A549 (cell line): ENCODE measurements at regions of chr19 and their contacts with region 1.

Region 1: GRCh38 chr19:38229585-38230073 is 5.6 kb upstream of the DPF1 start:
- DNase-seq: peak; percentile 89 to 93
- ATAC-seq: peak; percentile 49 to 79
- H3K4me3 ChIP-seq: peak overlapping the region; percentile 52
- H3K27ac ChIP-seq: peak overlapping the region in 1 of 2 experiments; percentile 67; a peak in 3 of 6 replicates
- H3K4me1 ChIP-seq: peaks cover 25% of the 10 kb centered on the region
- CTCF ChIP-seq: no peak
- EP300 ChIP-seq: no peak
- POLR2A ChIP-seq: no peak
- RAD21 ChIP-seq: no peak

Region 2: DNA sequence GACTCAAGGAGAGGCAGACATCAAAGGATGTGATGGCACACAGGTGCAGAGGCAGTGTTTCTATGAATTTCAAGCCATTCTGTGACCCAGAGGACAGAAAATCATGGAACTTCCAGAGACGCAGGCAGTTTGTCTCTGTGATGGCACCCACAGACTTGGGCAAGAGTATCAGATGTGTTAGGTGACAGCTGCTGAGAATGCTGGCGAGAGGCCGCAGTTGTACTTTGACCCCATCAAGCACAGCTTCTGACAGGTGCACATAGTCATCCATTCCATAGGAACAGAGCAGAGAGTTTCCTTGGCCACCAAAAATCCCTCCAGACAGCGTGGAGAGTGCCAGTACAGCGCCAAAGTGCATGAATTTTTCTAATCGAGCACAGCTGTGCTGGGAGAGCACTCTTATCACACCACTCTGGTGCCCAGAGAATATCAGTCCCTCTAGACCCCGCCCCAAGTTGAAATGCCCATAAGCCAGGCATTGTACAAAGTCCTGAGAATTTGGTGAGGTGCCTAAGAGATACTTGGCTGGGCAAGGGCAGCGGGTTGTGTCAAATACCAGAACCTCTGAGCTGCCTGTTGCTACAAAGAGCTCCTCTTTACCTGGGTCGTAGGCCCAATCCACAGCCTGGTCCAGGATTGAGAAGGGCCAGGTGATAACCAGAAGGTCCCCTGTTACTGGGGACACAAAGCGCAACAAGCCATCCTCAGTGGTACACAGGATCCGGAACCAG is 335.6 kb before region 1 on chr19:
- CTCF ChIA-PET with region 1: interaction called, 187 read pairs
- POLR2A ChIA-PET with region 1: no interaction called
- DNase-seq: no peak
- ATAC-seq: no peak
- H3K4me3 ChIP-seq: no peak overlapping the region
- H3K27ac ChIP-seq: no peak overlapping the region
- H3K4me1 ChIP-seq: no peaks in the 10 kb centered on the region
- CTCF ChIP-seq: no peak
- EP300 ChIP-seq: no peak
- POLR2A ChIP-seq: no peak
- RAD21 ChIP-seq: no peak

Region 3: GRCh38 chr19:38263689-38264485 is 34.3 kb after region 1 on chr19:
- CTCF ChIA-PET with region 1: interaction called, 613 read pairs
- POLR2A ChIA-PET with region 1: no interaction called
- DNase-seq: peak; percentile 78 to 87
- ATAC-seq: peak; percentile 64 to 66
- H3K4me3 ChIP-seq: peak overlapping the region; percentile 67
- H3K27ac ChIP-seq: peak overlapping the region; percentile 89 to 91
- H3K4me1 ChIP-seq: peaks cover 51% of the 10 kb centered on the region
- CTCF ChIP-seq: no peak
- EP300 ChIP-seq: no peak; a peak in 1 of 5 replicates
- POLR2A ChIP-seq: no peak
- RAD21 ChIP-seq: no peak; a peak in 1 of 5 replicates

Region 4: DNA sequence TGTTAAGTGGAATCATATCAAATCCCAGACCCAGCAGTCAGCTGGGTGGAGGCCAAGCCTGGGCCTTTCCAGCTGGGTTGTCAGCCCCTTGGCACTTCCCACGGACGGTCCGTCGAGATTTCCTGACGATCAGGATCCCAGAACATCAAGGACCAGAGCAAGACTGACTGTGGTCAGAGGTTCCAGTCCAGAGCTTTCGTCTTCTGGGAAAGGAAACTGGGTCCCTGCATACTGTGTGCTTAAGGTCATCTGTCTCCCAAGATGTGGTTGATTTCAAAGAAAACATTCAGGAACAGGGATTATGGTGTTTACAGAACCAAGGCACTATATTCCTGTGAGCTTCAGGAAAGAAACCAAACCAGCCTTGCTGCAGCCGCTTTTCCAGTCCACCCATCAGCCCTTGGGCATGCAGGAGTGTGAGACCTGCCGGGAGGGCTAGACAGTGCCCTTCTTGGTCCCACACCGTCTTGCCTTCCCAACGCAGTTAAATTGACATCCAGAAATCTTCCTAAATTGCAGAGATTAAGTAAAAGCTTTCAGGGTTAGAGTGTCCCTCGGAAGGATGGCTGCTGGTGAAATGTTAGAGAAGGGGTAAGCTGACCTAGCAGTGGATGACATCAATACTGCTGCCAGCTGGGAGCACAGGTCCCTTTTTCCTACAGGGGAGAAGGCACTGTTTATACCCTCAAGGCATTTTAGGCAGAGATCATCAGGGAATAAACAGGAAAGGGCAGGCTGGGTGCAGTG is 69.4 kb after region 1 on chr19:
- CTCF ChIA-PET with region 1: interaction called, 26 read pairs
- POLR2A ChIA-PET with region 1: interaction called, 3 read pairs
- DNase-seq: no peak
- ATAC-seq: no peak
- H3K4me3 ChIP-seq: no peak overlapping the region
- H3K27ac ChIP-seq: peak overlapping the region; percentile 92 to 95
- H3K4me1 ChIP-seq: peaks cover 51% of the 10 kb centered on the region
- CTCF ChIP-seq: no peak
- EP300 ChIP-seq: no peak
- POLR2A ChIP-seq: no peak
- RAD21 ChIP-seq: no peak

Region 5: GRCh38 chr19:38329651-38330050 is 100.0 kb after region 1 on chr19:
- CTCF ChIA-PET with region 1: interaction called, 1,052 read pairs
- POLR2A ChIA-PET with region 1: no interaction called
- DNase-seq: no peak
- ATAC-seq: no peak
- H3K4me3 ChIP-seq: no peak overlapping the region
- H3K27ac ChIP-seq: no peak overlapping the region
- H3K4me1 ChIP-seq: no peaks in the 10 kb centered on the region
- CTCF ChIP-seq: no peak
- EP300 ChIP-seq: no peak
- POLR2A ChIP-seq: no peak
- RAD21 ChIP-seq: no peak

Region 6: DNA sequence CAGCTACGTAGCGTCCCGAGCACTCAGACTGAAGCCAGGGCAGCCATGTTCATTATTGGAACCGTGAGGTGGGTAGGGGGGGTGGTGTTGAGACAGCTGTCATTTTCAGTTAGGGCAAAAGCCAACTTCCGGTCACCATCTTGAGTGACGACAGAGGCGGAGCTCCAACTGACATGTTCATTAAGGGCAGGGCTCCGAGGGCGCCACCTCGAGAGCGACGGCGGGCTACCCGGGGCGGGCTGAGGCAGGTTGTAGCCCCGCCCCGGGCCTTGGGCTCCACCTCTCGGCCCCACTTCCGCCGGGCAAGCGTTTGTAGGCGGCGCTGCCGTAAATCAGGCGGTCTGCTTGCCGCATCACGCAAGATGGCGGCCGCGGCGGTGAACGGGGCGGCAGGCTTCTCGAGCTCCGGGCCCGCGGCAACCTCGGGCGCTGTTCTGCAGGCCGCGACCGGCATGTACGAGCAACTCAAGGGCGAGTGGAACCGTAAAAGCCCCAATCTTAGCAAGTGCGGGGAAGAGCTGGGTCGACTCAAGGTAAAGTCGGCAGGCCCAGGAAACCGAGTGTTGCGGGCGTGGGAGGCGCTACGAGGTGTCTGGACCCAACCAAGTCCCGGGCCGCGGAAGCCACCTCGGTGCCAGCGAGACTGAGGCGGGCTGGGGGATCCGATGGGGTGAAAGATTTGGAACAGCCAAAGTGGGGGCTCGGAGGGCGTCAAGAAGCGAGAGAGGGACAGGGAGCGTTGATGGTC is 145.0 kb after region 1 on chr19 and contains the start of gene PSMD8:
- CTCF ChIA-PET with region 1: interaction called, 67 read pairs
- POLR2A ChIA-PET with region 1: interaction called, 4 read pairs
- DNase-seq: peak; percentile 100
- ATAC-seq: peak; percentile 91 to 97
- H3K4me3 ChIP-seq: peak within 1 kb of the TSS; percentile 78
- H3K27ac ChIP-seq: peak within 1 kb of the TSS; percentile 88 to 91
- H3K4me1 ChIP-seq: peaks cover 17% of the 10 kb centered on the region
- CTCF ChIP-seq: peak; percentile 40
- EP300 ChIP-seq: no peak
- POLR2A ChIP-seq: peak; percentile 100
- RAD21 ChIP-seq: peak in 1 of 2 experiments; percentile 35; a peak in 3 of 5 replicates
- polyA plus RNA-seq, gene PSMD8: 437 and 469 TPM in 2 replicates